ENCODE measurements at regions of chr20 and their contacts with region 1.

Region 1: GRCh38 chr20:9220874-9221547 is 152.1 kb downstream of the PLCB4 start:
- DNase-seq: peak in 1 of 2 donors; percentile 16
- ATAC-seq: no peak
- H3K4me3 ChIP-seq: no peak overlapping the region
- H3K27ac ChIP-seq: no peak overlapping the region
- H3K4me1 ChIP-seq: peaks cover 4 to 70% (median 38%) of the 10 kb centered on the region in 9 donors
- H3K27me3 ChIP-seq: no peaks in the 10 kb centered on the region
- CTCF ChIP-seq: no peak

Region 2: DNA sequence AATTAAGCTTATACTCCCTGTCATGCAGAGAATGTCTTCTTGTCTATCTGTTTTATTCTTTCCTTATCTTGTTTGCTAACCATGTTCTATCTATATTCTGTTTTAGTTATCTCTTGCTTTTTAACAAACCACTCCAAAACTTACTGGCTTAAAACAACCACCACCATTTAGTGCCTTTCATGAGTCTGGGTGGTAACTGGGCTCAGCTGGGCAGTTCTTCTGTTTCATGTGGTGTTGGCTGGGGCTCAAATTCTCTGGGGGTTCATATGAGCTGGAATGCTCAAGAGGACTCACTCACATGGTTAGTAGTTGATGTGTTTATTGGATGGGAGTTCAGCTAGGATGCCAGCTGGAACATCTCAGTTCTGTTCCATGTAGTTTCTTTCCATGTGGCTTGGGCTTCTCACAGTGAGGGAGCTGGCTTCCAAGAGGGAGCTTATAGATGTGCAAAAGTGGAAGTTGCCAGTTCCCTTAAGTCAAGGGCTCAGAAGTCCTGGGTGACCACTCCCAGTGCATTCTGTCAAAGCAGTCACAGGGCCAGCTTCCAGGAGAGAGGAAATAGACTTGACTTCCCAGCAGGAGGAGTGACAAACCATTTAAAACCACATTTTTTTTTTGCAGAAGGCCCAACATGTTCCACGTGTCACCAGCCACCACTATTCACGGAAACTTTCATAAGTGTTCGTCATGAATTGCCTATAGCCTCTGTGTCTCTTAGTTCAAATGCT is 81.7 kb before region 1 on chr20:
- intact Hi-C with region 1: no loop called
- DNase-seq: no peak
- ATAC-seq: peak in 5 of 8 donors; percentile 24 to 48 (median 40)
- H3K4me3 ChIP-seq: no peak overlapping the region
- H3K27ac ChIP-seq: no peak overlapping the region
- H3K4me1 ChIP-seq: peaks cover 0 to 61% (median 25%) of the 10 kb centered on the region in 9 donors
- H3K27me3 ChIP-seq: no peaks in the 10 kb centered on the region
- CTCF ChIP-seq: no peak

Region 3: GRCh38 chr20:9172851-9173250 is 48.2 kb before region 1 on chr20:
- intact Hi-C with region 1: loop called in 1 of 10 experiments (anchors 5 kb)
- DNase-seq: no peak
- ATAC-seq: peak; percentile 13 to 76 (median 58)
- H3K4me3 ChIP-seq: no peak overlapping the region
- H3K27ac ChIP-seq: peak overlapping the region in 2 of 10 donors; percentile 23 to 45
- H3K4me1 ChIP-seq: peaks cover 4 to 41% (median 24%) of the 10 kb centered on the region in 9 donors
- H3K27me3 ChIP-seq: no peaks in the 10 kb centered on the region
- CTCF ChIP-seq: peak in 8 of 9 donors; percentile 20 to 68 (median 44)